ENCODE measurements at regions of chr3 and their contacts with region 1.

Region 1: GRCh38 chr3:192917404-192918274 is at the start of gene MB21D2:
- DNase-seq: peak; percentile 87
- total RNA-seq, gene MB21D2: 3.2 TPM

Region 2: GRCh38 chr3:192715126-192715525 is 202.5 kb before region 1 on chr3:
- intact Hi-C with region 1: no loop called
- DNase-seq: no peak

Region 3: DNA sequence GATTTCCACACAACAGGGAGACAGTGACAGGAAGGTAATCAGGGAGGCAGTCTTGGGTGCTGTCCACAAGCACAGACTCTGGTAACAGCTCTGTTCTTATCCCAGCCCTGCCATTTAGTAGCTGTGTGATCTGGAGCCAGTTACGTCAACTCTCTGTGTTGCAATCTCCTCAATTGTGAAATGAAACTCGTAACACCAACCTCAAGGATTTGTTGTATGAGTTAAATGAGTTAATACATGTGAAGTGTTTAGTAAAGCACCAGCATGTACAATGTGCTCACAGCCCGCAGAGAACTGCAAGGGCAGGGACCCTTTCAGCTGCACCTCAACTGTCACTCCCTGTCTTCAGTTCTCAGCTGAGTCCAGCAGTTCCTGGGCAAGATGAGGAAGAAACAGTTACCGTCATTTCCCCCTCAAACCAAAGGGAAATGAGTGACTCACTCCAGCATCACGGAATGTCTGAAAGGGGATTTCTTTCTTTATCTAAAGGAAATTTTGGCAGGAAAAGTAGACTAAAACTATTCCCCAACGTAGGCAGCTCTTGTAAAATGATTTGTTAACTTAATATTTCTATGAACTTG is 39.9 kb after region 1 on chr3:
- intact Hi-C with region 1: loop called (anchors 5 kb)
- DNase-seq: no peak

Region 4: GRCh38 chr3:193229851-193230425 is 312.3 kb after region 1 on chr3:
- intact Hi-C with region 1: loop called (anchors 10 kb)
- DNase-seq: no peak

Measured in cardiac septum (tissue), 1 donor.